ENCODE measurements at regions of chr2 and their contacts with region 1.

Region 1: GRCh38 chr2:76256458-76257084 is 545.9 kb upstream of the GCFC2 start:
- DNase-seq: peak in 1 of 2 experiments; percentile 24
- H3K4me3 ChIP-seq: no peak overlapping the region
- H3K4me3 Mint-ChIP-seq: no peak overlapping the region
- H3K27ac Mint-ChIP-seq: no peak overlapping the region
- H3K4me1 ChIP-seq: peaks cover 5% of the 10 kb centered on the region; the same call in 1 of the 2 replicates
- H3K4me1 Mint-ChIP-seq: no peaks in the 10 kb centered on the region
- H3K27me3 ChIP-seq: no peaks in the 10 kb centered on the region
- H3K27me3 Mint-ChIP-seq: no peaks in the 10 kb centered on the region
- CTCF ChIP-seq: no peak

Region 2: DNA sequence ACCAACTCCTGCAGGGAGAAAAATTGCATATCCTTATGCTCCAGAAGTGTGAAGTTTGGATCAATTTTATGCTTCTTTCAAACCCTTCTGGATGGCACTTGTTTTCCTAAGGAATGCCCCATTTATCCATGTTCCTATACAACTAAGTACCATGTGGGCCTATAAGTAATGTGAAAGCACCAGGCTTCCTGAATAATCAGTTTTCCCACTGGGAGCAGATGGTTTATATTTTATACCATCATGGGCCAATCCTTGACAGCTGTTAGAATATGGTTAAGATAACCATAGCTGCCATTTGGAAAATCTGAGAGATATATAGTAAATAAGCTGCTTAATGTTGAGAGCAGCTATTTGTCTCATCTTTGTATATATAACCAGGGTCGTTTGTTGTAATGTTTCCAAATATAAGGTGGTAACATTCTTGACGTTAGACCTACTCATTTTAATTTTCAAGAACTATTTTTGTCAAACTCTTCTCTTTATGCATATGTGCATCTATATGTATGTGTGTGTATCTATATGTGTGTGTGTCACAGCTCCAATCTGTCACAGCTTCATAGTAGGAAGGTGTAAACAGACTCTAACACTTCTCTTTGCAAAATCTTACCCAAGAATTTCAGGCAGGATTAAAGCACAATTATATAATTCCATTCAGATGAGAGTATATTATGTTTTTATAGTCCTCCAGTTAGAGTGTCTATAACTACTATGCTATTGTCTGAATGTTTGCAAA is 87.1 kb before region 1 on chr2:
- CTCF ChIA-PET with region 1: no interaction called
- POLR2A ChIA-PET with region 1: no interaction called
- intact Hi-C with region 1: loop called (anchors 1 kb)
- DNase-seq: no peak
- H3K4me3 ChIP-seq: no peak overlapping the region
- H3K4me3 Mint-ChIP-seq: no peak overlapping the region
- H3K27ac Mint-ChIP-seq: no peak overlapping the region
- H3K4me1 ChIP-seq: peaks cover 21% of the 10 kb centered on the region
- H3K4me1 Mint-ChIP-seq: peaks cover 30% of the 10 kb centered on the region
- H3K27me3 ChIP-seq: no peaks in the 10 kb centered on the region
- H3K27me3 Mint-ChIP-seq: no peaks in the 10 kb centered on the region
- CTCF ChIP-seq: no peak

Measured in Caco-2 (cell line).